Esophagus muscularis mucosa (tissue), 4 donors: ENCODE measurements at regions of chr9 and their contacts with region 1.

Region 1: GRCh38 chr9:12884737-12885414 is 110.1 kb downstream of the LURAP1L start:
- DNase-seq: no peak
- H3K4me3 ChIP-seq: no peak overlapping the region
- H3K27ac ChIP-seq: no peak overlapping the region
- H3K4me1 ChIP-seq: peaks cover 18 to 40% (median 30%) of the 10 kb centered on the region in 4 donors
- H3K27me3 ChIP-seq: no peaks in the 10 kb centered on the region
- CTCF ChIP-seq: peak; percentile 57 to 64 (median 63)
- EP300 ChIP-seq: no peak
- POLR2A ChIP-seq: no peak

Region 2: DNA sequence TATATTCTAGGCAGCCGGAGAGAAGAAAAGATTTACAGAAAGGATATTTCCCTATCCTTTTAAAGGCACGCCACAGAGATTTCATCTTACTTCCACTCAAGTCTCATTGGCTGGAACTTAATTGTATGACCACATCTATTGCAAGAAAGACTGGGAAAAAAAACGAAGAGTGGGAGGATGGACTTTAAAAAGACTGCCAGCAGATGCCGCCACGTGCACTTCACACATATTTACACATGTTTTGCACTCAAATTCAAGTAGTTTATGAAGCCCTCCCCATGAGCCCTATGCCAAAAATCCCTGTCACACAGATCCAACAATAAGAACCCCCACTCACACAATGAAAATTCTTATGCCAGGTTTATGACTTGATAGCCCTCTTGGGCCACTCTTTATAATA is 330.2 kb before region 1 on chr9:
- intact Hi-C with region 1: no loop called
- DNase-seq: no peak
- H3K4me3 ChIP-seq: no peak overlapping the region
- H3K27ac ChIP-seq: no peak overlapping the region
- H3K4me1 ChIP-seq: no peaks in the 10 kb centered on the region
- H3K27me3 ChIP-seq: no peaks in the 10 kb centered on the region
- CTCF ChIP-seq: no peak
- EP300 ChIP-seq: no peak
- POLR2A ChIP-seq: no peak

Region 3: GRCh38 chr9:12708562-12709298 is 176.1 kb before region 1 on chr9:
- intact Hi-C with region 1: no loop called
- DNase-seq: no peak
- H3K4me3 ChIP-seq: no peak overlapping the region
- H3K27ac ChIP-seq: no peak overlapping the region
- H3K4me1 ChIP-seq: no peaks in the 10 kb centered on the region
- H3K27me3 ChIP-seq: no peaks in the 10 kb centered on the region
- CTCF ChIP-seq: no peak
- EP300 ChIP-seq: no peak
- POLR2A ChIP-seq: no peak

Region 4: DNA sequence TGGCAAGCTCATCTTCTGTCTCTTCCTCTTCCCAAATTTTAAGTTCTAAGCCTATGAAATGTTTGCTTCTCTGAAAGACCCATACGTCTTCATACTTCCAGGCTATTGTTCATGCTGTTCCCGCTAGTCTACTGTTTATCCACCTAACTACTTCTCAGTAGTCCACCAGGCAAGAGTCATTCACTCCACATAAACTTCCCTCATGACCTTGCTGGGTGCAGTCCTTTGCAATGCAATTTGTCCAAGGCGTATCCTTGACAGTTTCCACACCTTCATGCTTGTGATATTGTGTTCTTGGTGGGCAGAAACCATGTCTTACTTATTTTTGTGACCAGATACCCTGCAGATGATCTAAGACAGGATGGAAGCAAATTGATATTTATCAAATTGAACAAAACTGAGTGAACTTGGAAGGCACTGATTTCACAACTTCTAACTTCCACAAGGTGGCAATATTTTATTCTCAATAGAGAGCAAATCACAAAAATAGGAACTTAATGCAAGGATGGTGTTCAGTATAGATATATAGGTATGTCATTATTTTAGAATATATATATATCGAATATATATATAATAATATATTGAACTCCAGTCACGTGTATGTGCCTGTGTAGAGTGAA is 161.4 kb before region 1 on chr9:
- intact Hi-C with region 1: loop called (anchors 2 kb)
- DNase-seq: no peak
- H3K4me3 ChIP-seq: no peak overlapping the region
- H3K27ac ChIP-seq: no peak overlapping the region
- H3K4me1 ChIP-seq: peaks cover 0 to 10% (median 7%) of the 10 kb centered on the region in 4 donors
- H3K27me3 ChIP-seq: no peaks in the 10 kb centered on the region
- CTCF ChIP-seq: peak; percentile 52 to 69 (median 59)
- EP300 ChIP-seq: no peak
- POLR2A ChIP-seq: no peak

Region 5: DNA sequence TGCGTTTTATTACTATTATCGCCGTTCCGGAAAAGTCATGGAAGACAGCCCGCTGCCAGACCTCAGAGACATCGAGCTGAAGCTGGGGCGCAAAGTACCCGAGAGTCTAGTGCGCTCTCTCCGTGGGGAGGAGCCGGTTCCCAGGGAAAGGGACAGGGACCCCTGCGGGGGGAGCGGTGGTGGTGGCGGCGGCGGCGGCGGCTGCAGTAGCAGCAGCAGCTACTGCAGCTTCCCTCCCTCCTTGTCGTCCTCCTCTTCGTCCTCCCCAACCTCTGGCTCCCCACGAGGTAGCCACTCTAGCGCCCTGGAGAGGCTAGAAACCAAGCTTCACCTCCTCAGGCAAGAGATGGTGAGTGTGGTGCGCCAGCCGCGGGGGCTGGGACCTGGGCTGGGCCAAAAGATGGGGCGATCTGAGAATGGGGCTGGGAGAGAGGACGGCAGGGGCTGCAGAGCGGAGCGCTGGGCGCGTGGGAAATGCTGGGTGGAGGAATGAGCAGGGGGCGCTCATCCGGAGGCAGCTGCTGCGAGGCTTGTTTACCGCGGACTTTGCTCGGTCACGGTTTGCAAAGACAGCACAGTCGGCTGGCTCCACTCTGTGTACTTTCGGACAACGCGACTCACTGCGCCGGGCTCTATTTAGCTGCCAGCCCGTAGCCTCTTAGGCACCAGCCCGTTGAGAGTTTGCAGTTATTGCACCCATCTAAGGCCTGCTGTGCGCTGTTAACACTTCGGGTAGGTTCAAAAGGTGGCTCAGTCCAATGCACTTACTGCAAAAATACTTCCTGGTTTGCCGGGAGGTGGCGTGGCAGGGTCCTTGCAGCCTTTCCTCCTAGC is 109.0 kb before region 1 on chr9:
- intact Hi-C with region 1: loop called (anchors 2 kb)
- DNase-seq: no peak
- H3K4me3 ChIP-seq: peak overlapping the region; percentile 76 to 89 (median 83)
- H3K27ac ChIP-seq: peak overlapping the region; percentile 86 to 94 (median 90)
- H3K4me1 ChIP-seq: peaks cover 5 to 47% (median 38%) of the 10 kb centered on the region in 4 donors
- H3K27me3 ChIP-seq: no peaks in the 10 kb centered on the region
- CTCF ChIP-seq: peak; percentile 54 to 60 (median 58)
- EP300 ChIP-seq: no peak
- POLR2A ChIP-seq: no peak

Region 6: DNA sequence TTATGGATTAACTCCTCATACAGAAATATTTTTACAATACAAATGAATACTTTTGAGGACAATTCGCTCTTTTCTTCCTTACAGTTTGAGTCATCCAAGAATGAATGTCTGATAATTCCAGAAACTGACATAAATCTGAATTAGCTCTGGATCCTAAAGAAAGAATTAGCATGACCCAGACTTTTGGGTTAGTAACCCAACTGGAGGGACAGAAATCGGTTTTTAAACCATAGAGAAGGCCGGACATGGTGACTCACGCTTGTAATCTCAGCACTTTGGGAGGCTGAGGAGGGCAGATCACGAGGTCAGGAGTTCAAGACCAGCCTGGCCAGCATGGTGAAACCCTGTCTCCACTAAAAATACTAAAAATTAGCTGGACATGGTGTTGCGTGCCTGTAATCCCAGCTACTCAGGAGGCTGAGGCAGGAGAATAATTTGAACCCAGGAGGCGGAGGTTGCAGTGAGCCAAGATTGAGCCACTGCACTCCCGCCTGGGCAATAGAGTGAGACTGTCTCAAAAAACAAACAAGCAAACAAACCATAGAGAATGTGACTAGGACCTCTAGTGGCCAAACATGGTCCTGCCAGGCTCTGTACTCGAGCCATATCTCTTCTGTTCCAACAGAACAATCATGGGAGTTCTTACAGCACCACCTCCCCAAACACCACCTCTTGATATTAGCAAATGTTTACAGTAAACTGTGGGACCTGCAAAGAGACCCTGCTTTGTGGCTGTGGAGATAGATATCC is 65.3 kb before region 1 on chr9:
- intact Hi-C with region 1: loop called (anchors 10 kb)
- DNase-seq: no peak
- H3K4me3 ChIP-seq: no peak overlapping the region
- H3K27ac ChIP-seq: peak overlapping the region; percentile 50 to 70 (median 60)
- H3K4me1 ChIP-seq: peaks cover 11 to 48% (median 44%) of the 10 kb centered on the region in 4 donors
- H3K27me3 ChIP-seq: no peaks in the 10 kb centered on the region
- CTCF ChIP-seq: peak in 2 of 3 experiments; percentile 28 to 52
- EP300 ChIP-seq: no peak
- POLR2A ChIP-seq: no peak

Region 7: GRCh38 chr9:13088720-13089427 is 204.0 kb after region 1 on chr9:
- intact Hi-C with region 1: loop called (anchors 10 kb)
- DNase-seq: no peak
- H3K4me3 ChIP-seq: peak overlapping the region in 2 of 4 donors; percentile 3 to 23
- H3K27ac ChIP-seq: no peak overlapping the region
- H3K4me1 ChIP-seq: peaks cover 0 to 22% (median 8%) of the 10 kb centered on the region in 4 donors
- H3K27me3 ChIP-seq: no peaks in the 10 kb centered on the region
- CTCF ChIP-seq: peak; percentile 54 to 74 (median 74)
- EP300 ChIP-seq: no peak
- POLR2A ChIP-seq: no peak